PC-3 (cell line): ENCODE measurements at regions of chr6 and their contacts with region 1.

Region 1: DNA sequence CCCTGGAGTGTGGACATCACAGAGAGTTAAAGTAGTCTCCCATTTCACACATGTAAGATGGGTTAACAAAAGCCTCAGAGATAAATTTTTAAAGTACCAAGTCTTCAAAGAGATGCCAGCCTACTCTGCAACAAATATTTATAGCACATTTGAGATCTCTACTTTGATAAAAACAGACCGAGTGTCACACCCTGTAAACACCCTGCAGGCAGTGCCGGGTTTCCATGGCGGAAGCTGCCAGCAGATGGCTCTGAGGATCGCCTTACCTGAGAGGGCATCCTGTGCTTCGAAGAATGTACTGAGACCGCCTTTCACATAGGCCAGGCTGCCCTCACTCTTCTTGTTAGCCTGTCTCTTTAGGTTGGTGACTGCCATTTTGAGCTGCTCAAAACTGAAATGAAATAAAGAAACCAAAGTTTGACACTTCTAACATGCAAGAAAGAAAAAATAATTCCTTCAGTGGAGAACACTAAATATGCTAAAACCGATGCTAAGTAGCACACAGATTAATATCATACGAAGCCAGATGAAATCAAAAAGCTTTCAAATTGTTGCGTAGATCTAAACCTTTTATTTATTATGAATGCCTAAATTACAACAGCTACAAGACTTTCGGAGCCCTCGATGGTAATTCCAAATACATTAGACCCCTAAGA is 39.3 kb downstream of the HUS1B start:
- DNase-seq: peak; percentile 69
- ATAC-seq: peak; percentile 98
- H3K4me3 ChIP-seq: no peak overlapping the region
- H3K27ac ChIP-seq: no peak overlapping the region
- H3K4me1 ChIP-seq: peaks cover 8% of the 10 kb centered on the region; the same call in 1 of the 2 replicates
- H3K27me3 ChIP-seq: no peaks in the 10 kb centered on the region
- CTCF ChIP-seq: peak; percentile 73

Region 2: DNA sequence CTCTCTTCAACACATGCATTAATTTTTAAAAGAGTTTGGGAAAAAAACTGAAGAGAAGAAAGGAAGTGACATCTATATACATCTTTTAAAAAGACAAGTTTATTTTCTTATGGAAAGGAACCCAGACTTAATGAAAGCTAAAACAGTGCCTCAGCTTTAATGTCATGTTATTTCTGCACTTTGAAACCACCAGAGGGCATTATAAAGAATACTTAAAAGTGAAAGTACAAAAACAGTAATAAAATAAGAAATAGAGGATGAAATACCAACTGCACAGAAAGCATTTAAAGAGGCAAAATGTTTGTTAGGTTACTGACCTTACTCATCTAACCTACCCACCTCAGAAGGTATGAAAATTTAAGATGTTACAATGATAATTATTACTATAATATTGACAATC is 59.5 kb before region 1 on chr6:
- CTCF ChIA-PET with region 1: no interaction called
- POLR2A ChIA-PET with region 1: no interaction called
- intact Hi-C with region 1: no loop called
- DNase-seq: peak; percentile 22
- ATAC-seq: no peak
- H3K4me3 ChIP-seq: no peak overlapping the region
- H3K27ac ChIP-seq: no peak overlapping the region
- H3K4me1 ChIP-seq: no peaks in the 10 kb centered on the region
- H3K27me3 ChIP-seq: no peaks in the 10 kb centered on the region
- CTCF ChIP-seq: peak; percentile 59

Region 3: GRCh38 chr6:684831-685636 is 67.5 kb after region 1 on chr6:
- CTCF ChIA-PET with region 1: no interaction called
- POLR2A ChIA-PET with region 1: no interaction called
- intact Hi-C with region 1: loop called (anchors 5 kb)
- DNase-seq: no peak
- ATAC-seq: no peak
- H3K4me3 ChIP-seq: no peak overlapping the region
- H3K27ac ChIP-seq: no peak overlapping the region
- H3K4me1 ChIP-seq: peaks cover 15% of the 10 kb centered on the region
- H3K27me3 ChIP-seq: no peaks in the 10 kb centered on the region
- CTCF ChIP-seq: no peak

Region 4: DNA sequence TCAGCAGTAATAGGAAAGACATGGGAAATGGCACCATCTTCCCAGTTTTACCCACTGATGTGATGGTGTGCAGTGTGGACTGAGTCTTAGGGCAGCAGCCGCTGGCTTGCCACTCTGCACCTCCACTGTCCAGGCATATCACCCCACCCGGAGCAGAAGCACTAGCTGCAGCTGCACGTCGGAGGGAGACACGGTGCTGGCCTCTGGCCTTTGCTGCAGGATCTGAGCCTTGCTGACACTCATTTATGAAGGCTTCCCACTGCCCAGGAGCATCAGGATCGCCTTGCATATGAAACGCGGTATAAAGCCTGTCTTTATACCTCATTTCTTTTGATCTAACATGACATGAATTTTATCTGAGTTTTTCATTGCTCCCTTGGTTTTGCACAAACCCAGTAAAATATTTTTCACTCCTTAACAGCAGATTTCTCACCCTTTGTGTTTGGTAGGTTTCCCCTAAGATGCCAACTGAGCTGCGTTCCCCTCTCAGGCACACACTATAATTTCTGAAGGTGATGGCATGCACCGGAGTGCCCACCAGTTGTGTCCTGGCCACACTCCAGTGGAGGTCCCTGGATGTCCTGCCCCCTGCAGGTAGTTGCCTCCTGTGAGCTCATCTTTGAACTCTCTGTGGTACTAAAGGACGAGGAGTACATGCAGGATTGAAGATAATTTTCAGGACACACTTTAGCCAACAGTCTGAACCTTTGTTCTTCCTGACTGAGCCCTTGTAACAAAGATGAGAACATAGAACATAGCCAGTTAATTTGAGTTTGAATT is 84.3 kb after region 1 on chr6:
- CTCF ChIA-PET with region 1: no interaction called
- POLR2A ChIA-PET with region 1: no interaction called
- intact Hi-C with region 1: loop called (anchors 5 kb)
- DNase-seq: no peak
- ATAC-seq: no peak
- H3K4me3 ChIP-seq: no peak overlapping the region
- H3K27ac ChIP-seq: no peak overlapping the region
- H3K4me1 ChIP-seq: peaks cover 28% of the 10 kb centered on the region
- H3K27me3 ChIP-seq: no peaks in the 10 kb centered on the region
- CTCF ChIP-seq: peak; percentile 35